PC-9 (cell line): ENCODE measurements at regions of chr11 and their contacts with region 1.

Region 1: GRCh38 chr11:73288873-73289707 is 17.0 kb downstream of the P2RY6 start:
- DNase-seq: peak; percentile 86 to 98
- H3K4me3 ChIP-seq: peak overlapping the region; percentile 32; the same call in 1 of the 2 replicates
- H3K27ac ChIP-seq: peak overlapping the region; percentile 88
- H3K4me1 ChIP-seq: peaks cover 35% of the 10 kb centered on the region
- H3K27me3 ChIP-seq: no peaks in the 10 kb centered on the region
- CTCF ChIP-seq: peak; percentile 99

Region 2: GRCh38 chr11:72831513-72832300 is 457.4 kb before region 1 on chr11:
- CTCF ChIA-PET with region 1: no interaction called
- POLR2A ChIA-PET with region 1: no interaction called
- intact Hi-C with region 1: loop called (anchors 1 kb)
- DNase-seq: peak; percentile 61 to 85
- H3K4me3 ChIP-seq: no peak overlapping the region
- H3K27ac ChIP-seq: no peak overlapping the region
- H3K4me1 ChIP-seq: 0 out of 2 replicates have a peak, but pooled peaks cover 4% of the 10 kb centered on the region
- H3K27me3 ChIP-seq: no peaks in the 10 kb centered on the region
- CTCF ChIP-seq: peak; percentile 97

Region 3: DNA sequence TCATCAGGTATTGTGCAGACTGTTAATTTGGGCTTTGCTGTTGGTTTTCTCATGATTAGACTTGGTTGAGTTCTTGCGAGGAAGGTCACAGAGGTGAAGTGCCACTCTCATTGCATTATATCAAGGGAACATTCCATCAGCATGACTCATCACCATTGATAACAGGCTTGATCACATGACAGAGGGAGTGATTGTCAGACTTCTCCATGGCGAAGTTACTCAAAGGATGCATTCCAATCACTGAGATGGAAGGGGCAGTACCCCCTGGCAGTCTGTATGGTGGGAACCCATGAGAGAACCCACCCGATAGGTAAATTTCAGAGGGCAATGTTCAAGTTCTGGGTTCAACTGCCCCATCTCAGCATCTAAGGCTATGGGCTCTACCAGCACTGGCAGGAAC is 90.4 kb before region 1 on chr11:
- CTCF ChIA-PET with region 1: no interaction called
- POLR2A ChIA-PET with region 1: no interaction called
- intact Hi-C with region 1: loop called (anchors 2 kb)
- DNase-seq: peak in 1 of 2 experiments; percentile 96
- H3K4me3 ChIP-seq: no peak overlapping the region
- H3K27ac ChIP-seq: peak overlapping the region; percentile 99
- H3K4me1 ChIP-seq: peaks cover 98% of the 10 kb centered on the region
- H3K27me3 ChIP-seq: no peaks in the 10 kb centered on the region
- CTCF ChIP-seq: no peak

Region 4: GRCh38 chr11:73249168-73249687 is 39.9 kb before region 1 on chr11:
- CTCF ChIA-PET with region 1: interaction called, 24 read pairs
- POLR2A ChIA-PET with region 1: interaction called, 3 read pairs
- intact Hi-C with region 1: loop called (anchors 1 kb)
- DNase-seq: peak; percentile 47 to 80
- H3K4me3 ChIP-seq: no peak overlapping the region
- H3K27ac ChIP-seq: peak overlapping the region; percentile 48
- H3K4me1 ChIP-seq: peaks cover 20% of the 10 kb centered on the region
- H3K27me3 ChIP-seq: no peaks in the 10 kb centered on the region
- CTCF ChIP-seq: no peak

Region 5: DNA sequence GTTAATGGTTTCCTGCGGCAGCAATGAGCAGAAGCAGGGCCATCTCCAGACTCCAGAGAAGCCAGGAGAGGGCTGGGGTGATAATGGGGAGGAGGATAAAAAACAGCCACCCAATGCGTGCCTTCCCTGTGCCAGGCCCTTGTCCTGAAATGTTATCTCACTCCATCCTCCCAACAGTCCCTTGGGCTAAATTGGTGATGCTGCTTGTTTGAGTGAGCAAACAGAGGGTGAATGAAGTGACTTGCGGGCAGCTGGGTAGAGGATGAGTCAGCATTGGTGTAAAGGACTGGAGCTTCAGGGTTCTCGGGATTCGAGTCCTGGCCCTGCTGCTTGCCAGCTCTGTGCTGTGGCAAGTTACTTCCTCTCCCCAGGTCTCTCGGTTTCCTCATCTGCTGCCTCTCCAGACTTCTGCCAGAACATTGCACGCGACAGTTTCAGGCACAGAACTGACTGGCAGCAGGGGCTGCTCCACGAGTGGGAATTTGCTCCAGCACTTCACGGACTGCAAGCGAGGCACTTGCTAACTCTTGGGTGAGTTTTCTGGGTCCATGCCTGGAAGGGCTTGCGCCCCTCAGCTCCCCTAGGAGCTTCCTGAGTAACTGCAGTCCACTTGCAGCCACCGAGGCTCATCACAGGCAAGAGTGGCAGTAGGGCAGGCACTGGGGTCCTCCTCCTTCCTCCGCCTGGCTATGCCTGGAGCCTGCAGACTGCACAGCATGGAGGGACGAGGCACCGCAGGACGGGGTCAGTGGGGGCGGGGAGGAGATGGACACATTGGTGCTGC is 17.0 kb before region 1 on chr11 and contains the start of gene P2RY6:
- CTCF ChIA-PET with region 1: interaction called, 7 read pairs
- POLR2A ChIA-PET with region 1: interaction called, 9 read pairs
- intact Hi-C with region 1: loop called (anchors 1 kb)
- DNase-seq: peak; percentile 84 to 99
- H3K4me3 ChIP-seq: peak within 1 kb of the TSS; percentile 80
- H3K27ac ChIP-seq: peak within 1 kb of the TSS; percentile 85
- H3K4me1 ChIP-seq: peaks cover 74% of the 10 kb centered on the region
- H3K27me3 ChIP-seq: no peaks in the 10 kb centered on the region
- CTCF ChIP-seq: no peak
- total RNA-seq, gene P2RY6: 29.7 and 34.7 TPM in 2 replicates